Heart right ventricle (tissue), 16 donors: ENCODE measurements at regions of chr2 and their contacts with region 1.

Region 1: DNA sequence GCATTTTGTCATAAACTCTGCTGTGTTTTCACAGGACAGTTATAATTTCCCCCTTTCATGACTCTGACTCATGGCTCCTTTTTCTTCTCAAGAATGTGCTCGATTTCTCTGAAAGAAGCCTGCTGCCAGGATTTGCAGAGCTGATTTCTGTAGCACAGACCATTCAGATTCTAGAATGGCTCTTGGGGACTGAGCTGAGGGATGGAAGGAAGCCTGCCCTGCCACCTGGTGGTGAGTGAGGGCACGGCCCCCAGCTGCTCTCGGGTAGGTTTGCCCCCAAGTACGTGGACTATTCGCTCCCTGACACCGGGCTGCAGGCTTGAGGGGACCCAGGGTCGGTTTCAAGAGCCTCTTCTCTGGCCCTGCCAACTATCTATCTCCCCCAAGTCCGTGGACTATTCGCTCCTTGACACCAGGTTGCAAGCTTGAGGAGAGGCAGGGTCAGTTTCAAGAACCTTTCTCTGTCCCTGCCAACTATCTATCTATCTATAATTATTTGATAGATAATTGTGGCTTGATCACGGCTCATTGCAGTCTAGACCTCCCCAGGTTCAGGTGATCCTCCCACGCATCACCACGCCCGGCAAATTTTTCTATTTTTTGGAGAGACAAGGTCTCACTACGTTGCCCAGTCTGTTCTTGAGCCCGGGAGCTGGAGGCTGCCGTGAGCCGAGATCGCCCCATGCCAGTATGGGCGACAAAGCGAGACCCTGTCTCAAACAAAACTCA is 1.4 kb upstream of the SMYD5 start:
- DNase-seq: peak; percentile 47 to 69
- ATAC-seq: peak; percentile 57 to 77 (median 70)
- H3K4me3 ChIP-seq: no peak overlapping the region
- H3K27ac ChIP-seq: no peak overlapping the region
- H3K4me1 ChIP-seq: peaks cover 0 to 26% (median 21%) of the 10 kb centered on the region in 9 donors
- H3K27me3 ChIP-seq: no peaks in the 10 kb centered on the region
- CTCF ChIP-seq: peak; percentile 73 to 96 (median 88)

Region 2: GRCh38 chr2:73176881-73177644 is 35.5 kb before region 1 on chr2:
- intact Hi-C with region 1: loop called in 2 of 10 experiments (anchors 1 to 5 kb)
- DNase-seq: peak; percentile 92
- ATAC-seq: peak; percentile 92 to 96 (median 94)
- H3K4me3 ChIP-seq: peak overlapping the region; percentile 26 to 75 (median 60)
- H3K27ac ChIP-seq: peak overlapping the region in 9 of 10 donors; percentile 71 to 89 (median 80)
- H3K4me1 ChIP-seq: peaks cover 4 to 31% (median 25%) of the 10 kb centered on the region in 9 donors
- H3K27me3 ChIP-seq: peaks cover 0 to 61% (median 27%) of the 10 kb centered on the region in 7 donors
- CTCF ChIP-seq: peak; percentile 97 to 99 (median 98)